ENCODE measurements at regions of chr17 and their contacts with region 1.

Region 1: GRCh38 chr17:20226814-20227482 is 217.8 kb downstream of the SPECC1 start:
- DNase-seq: peak; percentile 79
- H3K4me3 Mint-ChIP-seq: no peak overlapping the region
- H3K27ac Mint-ChIP-seq: peak overlapping the region; percentile 49
- H3K4me1 Mint-ChIP-seq: peaks cover 46% of the 10 kb centered on the region
- H3K27me3 Mint-ChIP-seq: no peaks in the 10 kb centered on the region
- CTCF ChIP-seq: peak; percentile 87

Region 2: DNA sequence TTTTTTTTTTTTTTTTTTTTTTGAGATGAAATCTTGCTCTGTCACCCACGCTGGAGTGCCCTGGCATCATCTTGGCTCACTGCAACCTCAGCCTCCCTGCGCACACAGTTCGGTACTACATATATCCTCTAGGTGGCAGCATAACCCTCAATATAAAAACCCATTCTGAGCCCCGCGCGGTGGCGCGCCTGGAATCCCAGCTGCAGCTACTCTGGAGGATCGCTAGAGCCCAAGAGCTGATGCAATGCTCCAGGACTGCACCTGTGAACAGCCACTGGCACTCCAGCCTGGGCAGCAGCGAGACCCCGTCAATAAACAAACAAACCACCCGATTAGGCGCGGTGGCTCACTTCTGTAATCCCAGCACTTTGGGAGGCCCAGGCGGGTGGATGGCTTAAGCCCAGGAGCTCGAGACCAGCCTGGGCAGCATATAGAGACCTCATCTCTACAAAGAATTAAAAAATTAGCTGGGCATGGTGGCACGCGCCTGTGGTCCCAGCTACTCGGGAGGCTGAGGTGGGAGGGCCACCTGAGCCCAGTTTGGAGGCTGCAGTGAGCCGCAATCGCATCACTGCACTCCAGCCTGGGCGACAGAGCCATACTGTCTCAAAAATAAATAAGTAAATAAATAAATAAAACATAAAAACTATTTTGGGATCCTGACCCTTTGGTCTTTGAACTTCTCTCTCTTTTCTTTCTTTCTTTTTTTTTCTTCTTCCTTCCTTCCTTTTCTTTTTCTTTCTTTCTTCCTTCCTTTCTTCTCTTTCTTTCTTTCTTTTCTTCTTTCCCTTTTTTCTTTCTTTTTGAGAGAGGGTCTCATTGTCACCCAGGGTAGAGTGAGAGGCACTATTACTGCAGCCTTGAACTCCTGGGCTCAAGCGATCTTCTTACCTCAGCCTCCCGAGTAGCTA is 233.9 kb before region 1 on chr17:
- CTCF ChIA-PET with region 1: interaction called, 6 read pairs
- POLR2A ChIA-PET with region 1: no interaction called
- intact Hi-C with region 1: loop called (anchors 5 kb)
- DNase-seq: peak; percentile 89
- H3K4me3 Mint-ChIP-seq: no peak overlapping the region
- H3K27ac Mint-ChIP-seq: peak overlapping the region; percentile 41
- H3K4me1 Mint-ChIP-seq: peaks cover 10% of the 10 kb centered on the region
- H3K27me3 Mint-ChIP-seq: peaks cover 10% of the 10 kb centered on the region
- CTCF ChIP-seq: peak; percentile 63

Region 3: DNA sequence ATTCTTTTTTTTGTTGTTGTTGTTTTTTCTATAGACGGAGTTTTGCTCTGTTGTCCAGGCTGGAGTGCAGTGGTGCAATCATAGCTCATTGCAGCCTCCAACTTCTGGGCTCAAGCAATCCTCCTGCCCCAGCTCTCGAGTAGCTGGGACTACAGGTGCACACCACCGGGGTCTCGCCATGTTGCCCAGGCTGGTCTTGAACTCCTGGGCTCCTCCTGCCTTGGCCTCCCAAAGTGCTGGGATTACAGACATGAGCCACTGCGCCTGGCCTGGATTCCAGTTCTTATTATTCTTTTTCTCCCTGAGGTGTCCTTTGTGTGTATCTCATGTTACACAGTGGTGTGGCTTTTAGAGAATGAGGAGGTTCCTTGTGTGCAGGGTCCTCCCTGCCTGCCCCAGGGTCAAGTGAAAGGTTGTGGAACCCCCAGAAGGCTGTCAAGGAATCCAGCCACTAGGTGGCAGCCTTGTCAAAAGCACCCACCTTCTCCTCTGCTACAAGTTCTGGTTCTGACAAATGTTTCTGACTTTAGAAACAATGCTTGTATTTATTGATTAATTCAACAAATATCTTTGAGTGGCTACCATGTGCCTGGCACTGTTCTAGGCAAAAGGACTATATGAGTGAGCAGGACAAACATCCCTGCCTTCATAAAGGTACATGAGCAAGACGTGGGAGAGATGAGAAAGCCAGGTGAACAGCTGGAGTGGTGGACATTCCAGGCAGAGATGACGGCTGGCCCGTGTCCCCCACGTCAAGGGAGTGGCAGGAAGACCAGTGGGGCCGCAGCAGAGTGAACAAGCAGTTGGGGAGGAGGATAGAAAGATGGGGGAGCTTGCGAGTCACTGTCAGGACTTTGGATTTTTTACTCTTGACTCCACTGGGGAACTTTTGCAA is 105.3 kb before region 1 on chr17:
- CTCF ChIA-PET with region 1: interaction called, 56 read pairs
- POLR2A ChIA-PET with region 1: interaction called, 4 read pairs
- intact Hi-C with region 1: loop called (anchors 1 kb)
- DNase-seq: peak; percentile 77
- H3K4me3 Mint-ChIP-seq: no peak overlapping the region
- H3K27ac Mint-ChIP-seq: no peak overlapping the region
- H3K4me1 Mint-ChIP-seq: peaks cover 10% of the 10 kb centered on the region
- H3K27me3 Mint-ChIP-seq: no peaks in the 10 kb centered on the region
- CTCF ChIP-seq: peak; percentile 93

Region 4: GRCh38 chr17:20155258-20156195 is 71.4 kb before region 1 on chr17:
- CTCF ChIA-PET with region 1: interaction called, 9 read pairs
- POLR2A ChIA-PET with region 1: interaction called, 12 read pairs
- intact Hi-C with region 1: loop called (anchors 5 kb)
- DNase-seq: peak; percentile 96
- H3K4me3 Mint-ChIP-seq: no peak overlapping the region
- H3K27ac Mint-ChIP-seq: peak overlapping the region; percentile 21
- H3K4me1 Mint-ChIP-seq: peaks cover 7% of the 10 kb centered on the region
- H3K27me3 Mint-ChIP-seq: no peaks in the 10 kb centered on the region
- CTCF ChIP-seq: no peak

Region 5: DNA sequence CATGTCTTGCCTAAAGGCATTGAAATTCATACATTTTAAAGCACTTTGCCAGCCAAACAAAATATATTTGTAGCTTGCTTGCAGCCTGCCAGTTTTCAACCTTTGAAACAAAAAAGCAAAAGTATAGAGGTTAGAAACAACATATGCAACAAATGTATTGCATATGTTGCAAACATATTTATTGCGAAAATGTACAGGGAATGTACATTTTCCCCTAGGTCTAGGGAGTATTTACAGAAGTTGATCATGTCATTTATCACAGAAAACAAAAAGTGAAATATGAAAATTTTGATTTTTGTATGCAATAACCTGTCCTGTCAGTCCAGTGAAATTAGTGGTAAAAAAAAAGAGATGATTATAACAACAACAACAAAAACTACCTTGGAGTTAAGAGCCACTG is 46.3 kb before region 1 on chr17:
- CTCF ChIA-PET with region 1: no interaction called
- POLR2A ChIA-PET with region 1: no interaction called
- intact Hi-C with region 1: no loop called
- DNase-seq: no peak
- H3K4me3 Mint-ChIP-seq: no peak overlapping the region
- H3K27ac Mint-ChIP-seq: no peak overlapping the region
- H3K4me1 Mint-ChIP-seq: peaks cover 15% of the 10 kb centered on the region
- H3K27me3 Mint-ChIP-seq: no peaks in the 10 kb centered on the region
- CTCF ChIP-seq: no peak

Region 6: DNA sequence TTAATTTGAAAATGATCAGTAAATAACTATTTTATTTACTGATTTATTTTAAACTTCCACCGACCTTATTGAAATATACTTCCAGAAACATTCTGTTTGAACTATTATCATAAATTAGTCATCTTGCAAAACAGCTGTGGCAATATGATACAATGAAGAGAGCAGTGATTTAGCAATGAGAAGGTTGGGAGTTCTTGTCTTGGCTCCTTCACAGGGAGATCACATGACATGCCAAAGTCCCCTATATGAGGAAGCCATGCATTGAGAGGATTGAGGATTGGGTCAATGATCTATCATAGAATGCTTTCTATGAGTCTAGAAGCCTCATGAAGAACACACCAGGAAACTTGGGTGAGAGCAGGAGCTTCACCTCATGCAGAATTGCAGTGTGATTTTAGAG is 17.7 kb after region 1 on chr17:
- CTCF ChIA-PET with region 1: interaction called, 22 read pairs
- POLR2A ChIA-PET with region 1: no interaction called
- intact Hi-C with region 1: no loop called
- DNase-seq: peak; percentile 20
- H3K4me3 Mint-ChIP-seq: no peak overlapping the region
- H3K27ac Mint-ChIP-seq: no peak overlapping the region
- H3K4me1 Mint-ChIP-seq: no peaks in the 10 kb centered on the region
- H3K27me3 Mint-ChIP-seq: no peaks in the 10 kb centered on the region
- CTCF ChIP-seq: no peak

Region 7: GRCh38 chr17:20284570-20285295 is 57.8 kb after region 1 on chr17:
- CTCF ChIA-PET with region 1: no interaction called
- POLR2A ChIA-PET with region 1: no interaction called
- intact Hi-C with region 1: no loop called
- DNase-seq: no peak
- H3K4me3 Mint-ChIP-seq: no peak overlapping the region
- H3K27ac Mint-ChIP-seq: no peak overlapping the region
- H3K4me1 Mint-ChIP-seq: no peaks in the 10 kb centered on the region
- H3K27me3 Mint-ChIP-seq: no peaks in the 10 kb centered on the region
- CTCF ChIP-seq: no peak

Region 8: DNA sequence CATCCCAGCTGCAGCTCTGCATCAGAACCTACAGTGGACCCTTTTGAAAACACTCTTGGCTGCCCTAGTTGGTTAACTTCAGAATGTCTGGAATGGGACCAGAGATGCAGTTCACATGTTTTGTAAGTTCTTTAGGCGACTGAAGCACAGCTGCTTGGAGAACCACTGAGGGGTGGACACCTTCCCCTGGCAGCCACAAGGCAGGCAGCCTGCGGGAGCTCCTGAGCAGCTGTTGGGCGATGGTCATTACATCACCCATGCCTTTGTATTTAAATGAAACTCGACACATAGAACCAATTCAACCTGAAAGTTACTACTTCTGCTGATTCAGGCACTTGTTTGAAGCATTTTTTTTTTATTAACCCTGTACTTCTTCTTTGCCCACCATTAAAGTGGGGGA is 88.9 kb after region 1 on chr17:
- CTCF ChIA-PET with region 1: interaction called, 3 read pairs
- POLR2A ChIA-PET with region 1: no interaction called
- intact Hi-C with region 1: loop called (anchors 1 kb)
- DNase-seq: no peak
- H3K4me3 Mint-ChIP-seq: no peak overlapping the region
- H3K27ac Mint-ChIP-seq: no peak overlapping the region
- H3K4me1 Mint-ChIP-seq: peaks cover under 1% of the 10 kb centered on the region
- H3K27me3 Mint-ChIP-seq: no peaks in the 10 kb centered on the region
- CTCF ChIP-seq: no peak